Activated CD8-positive, alpha-beta T cell treated with anti-CD3 and anti-CD28 coated beads for 36 hours (primary cell): ENCODE measurements at regions of chr17 and their contacts with region 1.

Region 1: GRCh38 chr17:67824735-67825626 is at the start of gene BPTF:
- DNase-seq: peak; percentile 93
- ATAC-seq: peak; percentile 80
- H3K4me3 Mint-ChIP-seq: peak within 1 kb of the TSS; percentile 87
- H3K27ac Mint-ChIP-seq: peak within 1 kb of the TSS; percentile 94
- H3K4me1 Mint-ChIP-seq: peaks cover 19% of the 10 kb centered on the region
- H3K27me3 Mint-ChIP-seq: peaks cover 7% of the 10 kb centered on the region
- CTCF ChIP-seq: peak; percentile 97
- total RNA-seq, gene BPTF: 80.1 to 84.4 TPM

Region 2: GRCh38 chr17:67855504-67856324 is 30.7 kb after region 1 on chr17:
- CTCF ChIA-PET with region 1: interaction called, 6 read pairs
- POLR2A ChIA-PET with region 1: interaction called, 12 read pairs
- intact Hi-C with region 1: no loop called
- DNase-seq: peak; percentile 40
- ATAC-seq: peak; percentile 77
- H3K4me3 Mint-ChIP-seq: peak overlapping the region; percentile 62
- H3K27ac Mint-ChIP-seq: peak overlapping the region; percentile 82
- H3K4me1 Mint-ChIP-seq: peaks cover 64% of the 10 kb centered on the region
- H3K27me3 Mint-ChIP-seq: no peaks in the 10 kb centered on the region
- CTCF ChIP-seq: no peak